ENCODE measurements at regions of chr9 and their contacts with region 1.

Region 1: GRCh38 chr9:127715394-127716337 is at the starts of genes PTRH1 and TTC16:
- DNase-seq: peak; percentile 98
- H3K4me3 Mint-ChIP-seq: peak within 1 kb of the TSS; percentile 90
- H3K27ac Mint-ChIP-seq: peak within 1 kb of the TSS; percentile 74
- H3K4me1 Mint-ChIP-seq: peaks cover 29% of the 10 kb centered on the region
- H3K27me3 Mint-ChIP-seq: no peaks in the 10 kb centered on the region
- total RNA-seq, gene PTRH1: 20.9 to 22.7 TPM
- total RNA-seq, gene TTC16: 0.61 to 0.69 TPM

Region 2: DNA sequence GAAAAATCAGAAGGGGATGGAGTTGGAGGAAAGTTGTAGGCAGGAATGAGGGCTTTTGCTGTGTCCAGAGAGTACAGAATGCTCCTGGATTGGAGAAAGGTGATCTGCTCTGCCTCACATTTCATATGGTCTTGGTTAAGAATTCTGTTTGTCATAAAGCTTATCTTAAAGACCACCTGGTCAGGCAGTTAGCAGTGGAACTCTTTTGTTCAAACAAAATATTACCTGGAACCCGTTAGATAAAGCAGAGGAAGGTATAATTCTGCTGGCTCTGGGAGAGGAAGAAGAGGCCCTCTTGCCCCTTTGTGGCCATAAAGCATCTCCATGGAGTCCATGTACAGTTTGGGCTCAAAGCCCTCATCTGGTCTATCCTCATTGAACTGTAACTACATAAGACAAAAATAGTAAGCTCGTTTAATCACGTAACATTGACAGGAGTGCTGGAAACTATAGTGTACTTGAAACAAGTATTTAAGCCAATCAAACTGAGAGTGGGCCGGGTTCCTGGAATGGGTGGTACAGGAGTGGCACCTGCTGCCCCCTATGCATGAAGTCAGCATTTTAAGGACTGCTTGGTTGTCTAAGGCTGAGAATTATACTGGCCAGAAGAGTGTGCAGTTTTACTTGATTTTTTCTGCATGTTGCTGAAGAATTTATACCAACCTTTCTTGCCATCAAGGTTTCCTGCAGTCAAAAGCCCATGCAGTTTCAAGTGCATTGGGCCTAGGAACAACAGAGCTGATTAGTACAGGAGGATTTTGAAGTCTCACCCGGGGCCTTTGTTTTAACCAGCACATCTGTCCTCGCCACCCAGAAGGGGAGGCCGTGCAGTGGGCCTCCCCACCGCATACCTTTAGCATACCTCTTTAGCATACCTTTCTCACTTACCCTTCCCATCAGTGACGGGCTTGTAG is 63.7 kb before region 1 on chr9:
- CTCF ChIA-PET with region 1: no interaction called
- POLR2A ChIA-PET with region 1: no interaction called
- intact Hi-C with region 1: no loop called
- DNase-seq: no peak
- H3K4me3 Mint-ChIP-seq: no peak overlapping the region
- H3K27ac Mint-ChIP-seq: no peak overlapping the region
- H3K4me1 Mint-ChIP-seq: no peaks in the 10 kb centered on the region
- H3K27me3 Mint-ChIP-seq: no peaks in the 10 kb centered on the region

Region 3: DNA sequence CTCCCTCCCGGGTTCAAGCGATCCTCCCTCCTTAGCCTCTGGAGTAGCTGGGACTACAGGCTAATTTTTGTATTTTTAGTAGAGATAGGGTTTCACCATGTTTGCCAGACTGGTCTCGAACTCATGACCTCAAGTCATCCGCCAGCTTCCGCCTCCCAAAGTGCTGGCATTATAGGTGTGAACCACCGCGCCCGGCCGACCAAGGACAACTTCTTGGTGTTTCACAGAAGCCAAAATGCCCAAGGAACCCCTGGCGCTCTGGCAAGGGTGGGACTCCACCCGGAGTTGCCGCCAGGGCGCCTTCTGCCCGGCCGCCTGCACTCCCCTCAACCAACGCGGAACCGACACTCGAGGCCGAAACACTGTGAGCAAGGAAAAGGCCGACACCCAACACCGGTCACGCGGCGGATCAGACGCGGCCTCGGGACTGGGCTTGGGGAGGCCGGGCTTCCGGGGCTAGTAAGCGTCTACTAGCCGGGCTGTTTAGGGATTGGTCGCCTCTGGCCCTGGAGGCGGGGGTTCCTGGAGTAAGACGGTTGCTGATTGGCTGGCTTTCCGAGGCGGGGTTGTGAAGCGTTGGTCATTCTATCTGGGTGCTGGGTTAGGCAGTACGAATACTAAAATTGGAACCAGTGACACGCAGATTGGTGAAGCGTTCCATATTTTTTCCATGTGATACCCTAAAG is 16.5 kb before region 1 on chr9:
- CTCF ChIA-PET with region 1: no interaction called
- POLR2A ChIA-PET with region 1: no interaction called
- intact Hi-C with region 1: loop called (anchors 1 kb)
- DNase-seq: peak; percentile 94
- H3K4me3 Mint-ChIP-seq: peak overlapping the region; percentile 73
- H3K27ac Mint-ChIP-seq: peak overlapping the region; percentile 41
- H3K4me1 Mint-ChIP-seq: peaks cover 15% of the 10 kb centered on the region
- H3K27me3 Mint-ChIP-seq: no peaks in the 10 kb centered on the region